ENCODE measurements at regions of chr3 and their contacts with region 1.

Region 1: GRCh38 chr3:169489775-169490546 is 173.6 kb downstream of the MECOM start:
- DNase-seq: no peak
- H3K4me3 ChIP-seq: no peak overlapping the region
- H3K4me3 Mint-ChIP-seq: no peak overlapping the region
- H3K27ac ChIP-seq: no peak overlapping the region
- H3K27ac Mint-ChIP-seq: no peak overlapping the region
- H3K4me1 ChIP-seq: no peaks in the 10 kb centered on the region
- H3K4me1 Mint-ChIP-seq: no peaks in the 10 kb centered on the region
- H3K27me3 ChIP-seq: no peaks in the 10 kb centered on the region
- H3K27me3 Mint-ChIP-seq: peaks cover 0 to 2% of the 10 kb centered on the region in 2 donors

Region 2: GRCh38 chr3:168604767-168605166 is 885.2 kb before region 1 on chr3:
- CTCF ChIA-PET with region 1: no interaction called
- POLR2A ChIA-PET with region 1: no interaction called
- intact Hi-C with region 1: no loop called
- DNase-seq: no peak
- H3K4me3 ChIP-seq: no peak overlapping the region
- H3K4me3 Mint-ChIP-seq: no peak overlapping the region
- H3K27ac ChIP-seq: no peak overlapping the region
- H3K27ac Mint-ChIP-seq: no peak overlapping the region
- H3K4me1 ChIP-seq: no peaks in the 10 kb centered on the region
- H3K4me1 Mint-ChIP-seq: no peaks in the 10 kb centered on the region
- H3K27me3 ChIP-seq: no peaks in the 10 kb centered on the region
- H3K27me3 Mint-ChIP-seq: no peaks in the 10 kb centered on the region

Region 3: GRCh38 chr3:169186596-169186995 is 303.4 kb before region 1 on chr3:
- CTCF ChIA-PET with region 1: no interaction called
- POLR2A ChIA-PET with region 1: no interaction called
- intact Hi-C with region 1: no loop called
- DNase-seq: no peak
- H3K4me3 ChIP-seq: no peak overlapping the region
- H3K4me3 Mint-ChIP-seq: no peak overlapping the region
- H3K27ac ChIP-seq: no peak overlapping the region
- H3K27ac Mint-ChIP-seq: no peak overlapping the region
- H3K4me1 ChIP-seq: no peaks in the 10 kb centered on the region
- H3K4me1 Mint-ChIP-seq: no peaks in the 10 kb centered on the region
- H3K27me3 ChIP-seq: no peaks in the 10 kb centered on the region
- H3K27me3 Mint-ChIP-seq: peaks cover 0 to 3% of the 10 kb centered on the region in 2 donors

Region 4: DNA sequence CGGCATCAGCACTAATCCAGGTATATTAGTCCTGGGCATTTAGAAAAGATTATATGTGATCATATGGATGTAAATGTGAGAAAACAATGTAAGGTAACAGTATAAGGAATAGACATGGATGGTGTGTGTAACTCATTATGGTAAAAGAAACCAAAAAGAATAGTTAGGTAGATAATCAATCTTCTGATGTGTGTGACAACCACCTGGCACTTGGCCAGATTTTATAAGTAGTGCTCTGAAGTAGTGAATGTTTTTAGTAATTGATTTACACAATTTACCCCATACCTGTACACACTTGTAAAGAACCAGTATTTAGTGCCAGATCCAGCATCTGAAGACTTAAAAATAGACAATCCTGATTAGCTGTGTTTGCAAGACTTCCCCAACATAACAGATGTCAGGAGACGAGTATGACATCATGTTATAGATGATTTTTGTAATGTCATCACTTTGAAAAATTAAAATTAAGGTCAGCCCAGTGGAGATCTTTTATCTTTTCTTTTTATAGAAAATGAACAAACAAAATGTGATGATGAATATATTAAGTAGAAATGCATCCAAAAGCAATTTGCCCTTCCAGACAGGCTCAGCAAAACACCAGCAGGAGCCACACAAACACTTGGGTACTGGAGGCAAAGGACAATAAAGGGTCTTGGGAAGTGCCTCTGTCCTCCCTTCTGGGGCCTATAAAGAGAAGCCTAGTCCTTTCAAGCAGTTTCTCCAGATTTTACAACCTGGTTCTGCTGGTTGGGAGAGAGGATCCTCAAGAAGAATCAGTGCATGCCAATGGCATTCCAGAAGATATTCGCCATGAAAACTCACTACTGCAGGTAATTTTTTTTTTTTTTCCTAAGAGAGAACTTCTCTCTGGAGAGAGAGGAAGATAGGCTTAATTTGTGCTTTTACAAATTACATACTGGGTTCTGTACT is 32.9 kb after region 1 on chr3:
- CTCF ChIA-PET with region 1: no interaction called
- POLR2A ChIA-PET with region 1: no interaction called
- intact Hi-C with region 1: loop called (anchors 1 kb)
- DNase-seq: no peak
- H3K4me3 ChIP-seq: no peak overlapping the region
- H3K4me3 Mint-ChIP-seq: no peak overlapping the region
- H3K27ac ChIP-seq: no peak overlapping the region
- H3K27ac Mint-ChIP-seq: no peak overlapping the region
- H3K4me1 ChIP-seq: no peaks in the 10 kb centered on the region
- H3K4me1 Mint-ChIP-seq: no peaks in the 10 kb centered on the region
- H3K27me3 ChIP-seq: no peaks in the 10 kb centered on the region
- H3K27me3 Mint-ChIP-seq: peaks cover 2% of the 10 kb centered on the region in 2 donors

Measured in CD4-positive, alpha-beta memory T cell (primary cell).